PC-9 (cell line): ENCODE measurements at regions of chr3 and their contacts with region 1.

Region 1: GRCh38 chr3:13452490-13453335 is 27.4 kb upstream of the HDAC11 start:
- DNase-seq: peak; percentile 25 to 43
- H3K4me3 ChIP-seq: peak overlapping the region; percentile 59; the same call in 1 of the 2 replicates
- H3K27ac ChIP-seq: peak overlapping the region; percentile 71
- H3K4me1 ChIP-seq: peaks cover 13% of the 10 kb centered on the region
- H3K27me3 ChIP-seq: no peaks in the 10 kb centered on the region
- CTCF ChIP-seq: peak; percentile 77

Region 2: GRCh38 chr3:13091898-13092611 is 360.7 kb before region 1 on chr3:
- CTCF ChIA-PET with region 1: interaction called, 10 read pairs
- POLR2A ChIA-PET with region 1: no interaction called
- intact Hi-C with region 1: loop called (anchors 2 kb)
- DNase-seq: peak; percentile 69 to 87
- H3K4me3 ChIP-seq: no peak overlapping the region
- H3K27ac ChIP-seq: no peak overlapping the region
- H3K4me1 ChIP-seq: peaks cover 18% of the 10 kb centered on the region
- H3K27me3 ChIP-seq: no peaks in the 10 kb centered on the region
- CTCF ChIP-seq: peak; percentile 98

Region 3: DNA sequence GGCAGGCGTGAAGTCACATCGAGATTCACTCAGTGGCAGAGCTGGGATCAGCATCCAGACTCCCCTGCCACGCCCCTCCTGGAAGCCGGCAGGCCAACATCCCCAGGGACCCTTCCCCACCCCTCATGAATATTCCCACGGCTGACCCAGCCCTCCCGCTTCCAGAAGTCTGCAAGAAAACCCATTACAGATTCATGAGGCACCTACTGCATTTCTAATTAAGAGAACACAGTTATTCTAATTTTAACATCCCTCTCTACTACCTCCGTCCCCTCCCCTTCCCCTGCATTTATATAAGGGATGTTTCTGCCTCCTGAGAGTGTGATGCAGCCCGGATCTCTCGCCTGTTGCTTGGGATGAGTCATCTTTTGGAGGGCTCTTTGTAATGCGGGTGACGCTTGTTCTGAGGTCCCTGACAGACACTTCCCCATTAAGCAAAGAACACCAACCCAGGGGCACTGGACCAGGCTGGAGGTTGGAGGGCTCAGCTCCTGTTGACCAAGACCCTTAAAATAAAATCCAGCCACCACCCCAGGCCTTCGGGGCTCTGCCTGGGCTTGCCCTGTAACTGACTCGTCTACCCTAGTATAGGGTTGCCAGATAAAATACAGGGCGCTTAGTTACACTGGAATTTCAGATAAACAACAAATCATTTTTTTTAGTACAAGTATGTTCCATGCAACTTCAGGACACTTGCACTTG is 151.3 kb before region 1 on chr3:
- CTCF ChIA-PET with region 1: no interaction called
- POLR2A ChIA-PET with region 1: no interaction called
- intact Hi-C with region 1: loop called (anchors 5 kb)
- DNase-seq: peak; percentile 34 to 60
- H3K4me3 ChIP-seq: no peak overlapping the region
- H3K27ac ChIP-seq: no peak overlapping the region
- H3K4me1 ChIP-seq: peaks cover 12% of the 10 kb centered on the region; the same call in 1 of the 2 replicates
- H3K27me3 ChIP-seq: no peaks in the 10 kb centered on the region
- CTCF ChIP-seq: no peak

Region 4: GRCh38 chr3:13419505-13420044 is 33.1 kb before region 1 on chr3:
- CTCF ChIA-PET with region 1: interaction called, 10 read pairs
- POLR2A ChIA-PET with region 1: interaction called, 16 read pairs
- intact Hi-C with region 1: loop called (anchors 2 kb)
- DNase-seq: peak in 1 of 2 experiments; percentile 28
- H3K4me3 ChIP-seq: peak overlapping the region; percentile 90
- H3K27ac ChIP-seq: no peak overlapping the region
- H3K4me1 ChIP-seq: peaks cover 57% of the 10 kb centered on the region
- H3K27me3 ChIP-seq: no peaks in the 10 kb centered on the region
- CTCF ChIP-seq: no peak; the same call in 1 of the 2 replicates

Region 5: GRCh38 chr3:13507769-13508339 is 55.1 kb after region 1 on chr3:
- CTCF ChIA-PET with region 1: no interaction called
- POLR2A ChIA-PET with region 1: no interaction called
- intact Hi-C with region 1: no loop called
- DNase-seq: peak; percentile 52 to 92
- H3K4me3 ChIP-seq: no peak overlapping the region
- H3K27ac ChIP-seq: peak overlapping the region; percentile 53
- H3K4me1 ChIP-seq: peaks cover 65% of the 10 kb centered on the region
- H3K27me3 ChIP-seq: no peaks in the 10 kb centered on the region
- CTCF ChIP-seq: no peak

Region 6: GRCh38 chr3:13600941-13601576 is 148.3 kb after region 1 on chr3:
- CTCF ChIA-PET with region 1: no interaction called
- POLR2A ChIA-PET with region 1: interaction called, 11 read pairs
- intact Hi-C with region 1: no loop called
- DNase-seq: peak; percentile 59 to 91
- H3K4me3 ChIP-seq: no peak overlapping the region
- H3K27ac ChIP-seq: peak overlapping the region; percentile 38
- H3K4me1 ChIP-seq: peaks cover 37% of the 10 kb centered on the region
- H3K27me3 ChIP-seq: no peaks in the 10 kb centered on the region
- CTCF ChIP-seq: no peak